Heart left ventricle (tissue), 16 donors: ENCODE measurements at regions of chr2 and their contacts with region 1.

Region 1: GRCh38 chr2:96951093-96951654 is 35.2 kb downstream of the FAM178B start:
- DNase-seq: peak; percentile 72 to 89 (median 78)
- ATAC-seq: peak; percentile 74 to 92 (median 85)
- H3K4me3 ChIP-seq: no peak overlapping the region
- H3K27ac ChIP-seq: peak overlapping the region in 1 of 12 donors; percentile 71
- H3K4me1 ChIP-seq: peaks cover 0 to 41% (median 26%) of the 10 kb centered on the region in 12 donors
- H3K27me3 ChIP-seq: no peaks in the 10 kb centered on the region
- CTCF ChIP-seq: peak; percentile 85 to 98 (median 93)
- POLR2A ChIP-seq: no peak

Region 2: GRCh38 chr2:95738301-95738700 is 1212.9 kb before region 1 on chr2:
- intact Hi-C with region 1: no loop called
- DNase-seq: no peak
- ATAC-seq: no peak
- H3K4me3 ChIP-seq: no peak overlapping the region
- H3K27ac ChIP-seq: no peak overlapping the region
- H3K4me1 ChIP-seq: no peaks in the 10 kb centered on the region
- H3K27me3 ChIP-seq: peaks cover 0 to 15% (median 0%) of the 10 kb centered on the region in 9 donors
- CTCF ChIP-seq: no peak
- POLR2A ChIP-seq: no peak

Region 3: DNA sequence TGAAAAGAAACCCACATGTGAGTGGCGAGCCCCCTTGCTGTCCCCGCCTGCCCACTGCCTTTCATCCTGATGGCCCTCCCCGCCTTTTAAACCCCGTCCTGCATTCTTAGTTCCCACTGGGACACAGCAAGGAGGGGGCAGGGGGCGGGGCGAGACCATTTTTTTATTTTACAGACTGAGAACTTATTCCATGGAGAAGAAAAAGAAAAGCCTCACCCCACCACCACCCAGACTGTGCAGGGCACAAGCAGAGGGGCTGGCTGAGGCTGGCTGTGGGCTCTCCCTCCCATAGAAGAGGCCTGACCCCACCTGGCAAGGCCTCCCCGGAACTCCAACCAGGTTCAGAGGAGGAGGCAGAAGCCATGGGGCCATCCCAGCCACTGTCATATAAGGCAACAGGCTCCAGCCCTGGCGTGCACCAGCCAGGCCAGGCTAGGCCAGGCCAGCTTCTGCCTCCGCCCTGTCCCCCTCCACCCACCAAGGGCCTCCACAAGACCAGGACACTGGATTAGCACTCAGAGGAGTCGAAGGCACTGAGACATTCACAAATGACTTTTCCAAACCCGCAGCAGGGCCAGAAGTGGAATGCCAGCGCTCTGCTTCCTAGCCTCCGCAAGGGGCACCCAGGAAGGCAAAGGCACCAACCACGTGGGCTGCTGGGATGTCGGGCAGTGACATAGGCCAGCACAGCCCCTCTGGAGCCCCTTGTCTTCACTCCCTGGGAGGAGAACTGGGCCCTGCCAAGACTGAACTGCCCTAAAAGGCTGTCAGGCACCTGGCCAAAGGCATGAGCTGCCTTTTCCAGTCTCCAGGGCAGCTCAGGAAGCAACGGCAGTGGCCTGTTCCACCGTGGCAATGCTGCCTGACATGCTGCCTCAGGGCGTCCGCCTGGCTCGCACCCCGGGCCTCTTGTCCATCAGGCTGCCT is 43.8 kb before region 1 on chr2:
- intact Hi-C with region 1: loop called in 4 of 10 experiments (anchors 2 to 5 kb)
- DNase-seq: peak; percentile 88 to 94 (median 90)
- ATAC-seq: peak; percentile 93 to 96 (median 94)
- H3K4me3 ChIP-seq: peak overlapping the region in 10 of 12 donors; percentile 2 to 49 (median 31)
- H3K27ac ChIP-seq: peak overlapping the region; percentile 87 to 99 (median 92)
- H3K4me1 ChIP-seq: peaks cover 22 to 60% (median 44%) of the 10 kb centered on the region in 12 donors
- H3K27me3 ChIP-seq: no peaks in the 10 kb centered on the region
- CTCF ChIP-seq: peak in 2 of 12 donors; percentile 8 to 23
- POLR2A ChIP-seq: peak in 1 of 2 donors; percentile 56

Region 4: DNA sequence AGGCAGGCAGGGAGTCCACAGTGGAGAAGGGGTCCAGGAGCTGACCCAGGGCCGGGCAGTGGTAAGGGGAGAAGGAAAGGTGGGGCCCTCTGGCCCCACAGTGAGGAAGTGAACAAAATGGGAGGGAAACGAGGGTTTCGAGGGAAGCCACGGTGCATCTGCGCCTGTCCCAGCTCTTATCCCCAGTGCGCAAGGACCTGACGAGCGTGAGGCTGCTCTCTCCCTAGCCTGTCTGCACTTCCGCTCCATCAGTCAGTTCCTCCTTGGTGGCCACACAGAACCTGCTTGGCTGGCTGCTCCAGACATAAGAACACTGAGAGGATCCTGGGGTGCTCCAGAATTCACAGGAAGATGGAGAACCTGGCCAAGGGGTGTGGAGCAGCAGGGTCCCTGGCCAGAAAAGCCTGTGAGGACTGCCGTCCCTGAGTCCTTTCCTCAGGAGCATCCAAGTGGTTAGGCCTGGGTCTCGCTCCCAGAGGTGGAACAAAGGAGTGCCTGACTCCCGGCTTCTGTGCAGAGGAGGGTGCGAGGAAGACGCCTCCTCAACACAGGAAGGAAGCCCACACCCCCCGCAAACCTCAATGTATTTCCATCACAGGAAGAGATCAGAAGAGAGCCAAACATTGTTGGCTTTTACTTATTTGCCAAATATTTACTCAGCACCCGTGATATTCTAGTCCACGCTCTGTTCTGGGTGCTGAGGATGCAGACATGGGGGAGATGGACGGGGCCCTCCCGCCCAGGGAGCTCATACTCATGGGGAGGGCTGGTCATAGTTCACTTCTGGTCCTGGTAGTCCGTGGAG is 37.6 kb before region 1 on chr2:
- intact Hi-C with region 1: loop called in 7 of 10 experiments (anchors 2 to 5 kb)
- DNase-seq: peak in 3 of 5 donors; percentile 50 to 67 (median 53)
- ATAC-seq: peak; percentile 11 to 64 (median 33)
- H3K4me3 ChIP-seq: peak overlapping the region in 1 of 12 donors; percentile 5
- H3K27ac ChIP-seq: peak overlapping the region; percentile 22 to 83 (median 70)
- H3K4me1 ChIP-seq: peaks cover 3 to 63% (median 52%) of the 10 kb centered on the region in 12 donors
- H3K27me3 ChIP-seq: no peaks in the 10 kb centered on the region
- CTCF ChIP-seq: no peak
- POLR2A ChIP-seq: no peak

Region 5: DNA sequence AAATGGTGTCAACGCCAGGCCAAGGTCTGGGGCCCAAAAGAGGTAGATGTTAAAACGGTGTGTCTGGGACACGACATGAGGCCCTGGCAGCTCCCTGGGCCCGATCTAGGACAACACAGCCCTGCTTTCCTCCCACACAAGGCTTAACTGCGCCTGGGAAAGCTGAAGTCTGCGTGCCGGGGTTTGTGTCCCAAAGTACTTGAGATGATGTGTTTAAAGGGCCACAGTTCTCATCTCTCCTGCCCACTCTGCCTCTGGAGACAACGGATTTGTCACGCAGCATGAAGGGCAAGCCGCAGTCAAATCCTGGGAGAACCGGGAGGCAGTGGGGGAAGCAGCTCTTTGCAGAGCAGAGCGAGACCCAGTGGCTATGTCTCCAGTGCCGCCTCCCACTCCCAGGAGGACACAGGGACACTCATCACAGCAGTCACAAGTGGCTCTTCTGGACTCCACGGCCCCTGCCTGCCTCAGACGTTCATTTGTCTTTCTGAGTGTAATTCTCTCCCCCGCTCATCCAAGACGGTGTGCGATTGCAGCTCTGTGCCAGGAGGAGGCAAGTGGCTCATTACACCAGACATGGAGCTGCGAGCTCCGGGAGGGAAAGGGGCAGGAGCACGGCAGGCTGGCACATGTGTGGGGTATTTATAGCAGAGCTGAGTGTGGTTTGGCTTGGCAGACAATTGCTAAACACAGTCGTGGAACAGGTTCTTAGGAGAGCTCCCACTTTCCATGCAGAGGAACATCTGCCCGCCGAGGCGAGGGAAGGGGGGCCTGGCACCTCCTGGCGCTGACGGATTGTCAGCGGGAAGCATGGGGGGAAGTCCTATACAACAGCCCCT is 23.6 kb before region 1 on chr2:
- intact Hi-C with region 1: loop called in 1 of 10 experiments (anchors 2 kb)
- DNase-seq: peak; percentile 55 to 78 (median 64)
- ATAC-seq: peak; percentile 87 to 93 (median 92)
- H3K4me3 ChIP-seq: peak overlapping the region in 8 of 12 donors; percentile 8 to 47 (median 30)
- H3K27ac ChIP-seq: peak overlapping the region in 8 of 12 donors; percentile 17 to 82 (median 33)
- H3K4me1 ChIP-seq: peaks cover 0 to 19% (median 14%) of the 10 kb centered on the region in 12 donors
- H3K27me3 ChIP-seq: no peaks in the 10 kb centered on the region
- CTCF ChIP-seq: peak in 4 of 12 donors; percentile 10 to 24 (median 18)
- POLR2A ChIP-seq: no peak